ENCODE measurements at regions of chr5 and their contacts with region 1.

Region 1: DNA sequence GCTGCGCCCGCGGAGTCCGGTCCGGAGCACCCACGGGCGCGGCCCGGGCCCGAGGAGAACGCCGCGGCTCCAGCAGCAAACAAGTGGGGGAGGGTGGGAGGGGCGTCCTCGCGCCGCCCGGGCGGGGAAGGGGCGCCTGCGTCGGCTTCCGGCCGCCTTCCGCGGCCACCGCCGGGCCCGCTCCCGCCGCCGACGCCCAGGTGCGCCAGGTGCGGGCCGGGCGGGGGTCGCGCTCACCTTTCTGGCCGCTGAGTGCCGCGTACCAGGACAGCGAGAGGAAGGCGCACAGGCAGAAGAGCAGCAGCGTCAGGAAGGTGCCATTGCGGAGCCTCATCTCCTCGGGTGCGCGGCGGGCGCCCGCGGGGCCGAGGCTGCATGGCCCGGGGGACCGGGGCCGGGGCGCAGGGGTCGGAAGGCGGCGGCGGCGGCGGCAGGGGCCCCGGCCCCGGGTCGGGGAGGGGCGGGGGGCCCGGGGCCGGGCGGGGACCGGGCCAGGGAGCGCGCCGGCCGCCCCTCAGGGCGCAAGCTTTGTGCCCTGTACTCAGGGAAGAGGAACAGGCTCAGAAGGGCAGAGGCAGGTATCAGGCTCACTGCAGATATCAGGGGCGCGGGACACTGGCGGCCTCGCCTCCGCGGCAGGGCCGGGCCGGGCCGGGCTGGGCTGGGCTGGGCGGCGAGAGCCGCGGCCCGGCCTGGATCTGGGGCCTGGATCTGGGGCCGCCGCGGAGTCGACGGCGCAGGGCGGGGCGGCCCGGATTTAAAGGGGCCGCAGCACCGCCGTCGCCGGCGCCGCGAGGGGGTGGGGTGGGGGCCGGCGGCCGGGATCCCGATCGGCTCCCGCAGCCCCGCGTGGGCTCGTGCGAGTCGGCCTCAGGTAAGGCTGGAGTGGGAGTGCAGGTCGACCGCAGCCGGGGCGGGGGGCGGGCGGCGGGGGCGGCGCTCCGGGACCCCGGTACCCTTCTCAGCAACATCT is at the start of gene MGAT4B:
- DNase-seq: no peak
- H3K4me3 ChIP-seq: peak within 1 kb of the TSS; percentile 77
- H3K27ac ChIP-seq: peak within 1 kb of the TSS; percentile 21
- H3K27me3 ChIP-seq: no peaks in the 10 kb centered on the region
- CTCF ChIP-seq: no peak
- polyA plus RNA-seq, gene MGAT4B: 102 and 149 TPM in 2 replicates

Region 2: DNA sequence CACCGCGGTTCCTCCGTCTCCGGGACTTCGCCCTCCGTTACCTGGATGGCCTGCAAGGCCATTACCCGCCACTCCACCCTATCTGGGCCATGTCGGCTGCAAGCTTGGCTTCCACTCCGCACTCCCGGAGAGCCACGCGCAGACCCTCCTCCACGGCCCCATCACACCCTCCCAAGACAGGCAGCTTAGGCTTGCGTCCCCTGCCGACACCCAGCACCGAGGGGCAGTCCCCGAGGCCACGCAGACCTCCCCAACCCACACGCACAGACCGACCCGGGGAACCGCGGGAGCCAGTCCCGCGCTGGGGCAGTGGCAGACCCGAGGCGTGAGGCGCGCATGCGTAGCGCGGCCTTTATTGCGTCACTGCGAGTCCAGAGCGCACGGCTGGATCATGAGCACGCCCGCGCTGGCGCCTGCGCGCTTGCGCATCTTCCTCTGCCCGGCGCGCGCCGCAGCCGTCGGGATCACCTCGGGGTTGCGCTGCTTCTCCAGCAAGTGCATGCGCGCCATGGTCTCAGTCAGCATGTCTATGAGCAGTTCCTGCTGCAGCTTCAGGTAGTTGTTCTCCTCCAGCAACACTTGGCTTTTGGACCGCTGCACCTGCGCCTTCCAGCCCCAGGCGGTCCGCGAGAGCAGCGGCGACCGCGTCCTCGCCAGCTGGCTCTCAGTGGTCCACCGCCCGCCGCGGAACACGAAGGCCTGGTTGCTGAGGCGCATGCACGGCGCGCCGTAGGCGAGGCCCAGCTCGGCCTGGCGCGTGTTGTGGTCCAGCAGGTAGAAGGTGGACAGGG is 128.1 kb before region 1 on chr5:
- CTCF ChIA-PET with region 1: no interaction called
- POLR2A ChIA-PET with region 1: interaction called, 14 read pairs
- DNase-seq: peak; percentile 86
- H3K4me3 ChIP-seq: peak overlapping the region; percentile 92
- H3K27ac ChIP-seq: peak overlapping the region; percentile 77
- H3K27me3 ChIP-seq: no peaks in the 10 kb centered on the region
- CTCF ChIP-seq: no peak

Measured in AG04450 (cell line).